ENCODE measurements at regions of chr21 and their contacts with region 1.

Region 1: DNA sequence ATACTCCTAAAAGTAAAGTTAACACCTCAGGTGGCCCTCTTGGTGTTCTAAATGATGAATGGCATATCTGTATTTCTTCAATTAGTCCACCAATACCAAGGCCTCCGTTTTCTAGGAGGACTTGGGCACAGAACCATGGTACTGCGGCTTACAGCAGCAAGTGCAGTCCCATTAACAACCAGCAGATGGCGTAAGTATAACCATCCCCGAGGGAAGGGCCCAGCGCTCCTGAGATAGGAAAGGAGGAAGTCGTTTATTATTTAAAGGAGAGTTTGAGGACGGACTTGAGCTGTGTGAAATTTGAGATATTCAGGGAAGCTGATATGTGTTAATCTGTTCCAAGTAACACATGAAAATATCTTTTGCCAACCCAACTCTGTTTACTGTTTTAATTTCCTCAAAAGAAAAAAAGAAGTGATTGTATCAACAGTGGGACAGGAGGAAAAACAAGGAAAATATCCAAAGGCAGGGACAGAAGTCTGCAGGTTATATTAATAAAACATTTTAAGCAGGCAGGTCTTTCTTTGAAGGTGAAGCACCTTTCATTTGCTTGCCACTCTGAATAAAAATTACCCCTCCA is 37.7 kb upstream of the KCNJ15 start:
- DNase-seq: peak; percentile 13 to 70 (median 52)
- ATAC-seq: peak; percentile 64
- H3K4me3 ChIP-seq: no peak overlapping the region
- H3K4me3 Mint-ChIP-seq: no peak overlapping the region
- H3K27ac ChIP-seq: no peak overlapping the region
- H3K27ac Mint-ChIP-seq: no peak overlapping the region
- H3K4me1 ChIP-seq: no peaks in the 10 kb centered on the region
- H3K4me1 Mint-ChIP-seq: no peaks in the 10 kb centered on the region
- H3K27me3 ChIP-seq: no peaks in the 10 kb centered on the region
- H3K27me3 Mint-ChIP-seq: peaks cover 5% of the 10 kb centered on the region
- CTCF ChIP-seq: peak; percentile 86

Region 2: DNA sequence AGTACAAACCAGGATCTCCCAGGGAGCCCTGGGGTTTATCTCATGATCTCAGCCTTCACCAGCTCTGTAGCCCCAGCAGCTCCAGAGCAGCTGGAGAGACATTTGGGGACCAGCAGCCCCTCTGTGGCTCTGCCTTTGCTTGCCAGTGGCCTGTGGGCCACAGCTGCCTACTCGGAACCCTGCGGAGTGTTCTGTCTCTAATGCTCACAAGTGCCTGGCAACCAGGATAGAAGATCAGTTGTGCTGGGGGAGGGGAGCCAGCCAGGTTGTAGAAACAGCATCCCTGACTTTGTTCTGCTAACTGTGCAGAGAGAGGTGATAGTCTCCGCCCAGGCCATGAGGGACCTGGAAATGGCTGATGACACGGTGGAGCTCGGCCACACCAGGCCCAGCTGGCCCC is 13.2 kb before region 1 on chr21:
- CTCF ChIA-PET with region 1: interaction called, 13 read pairs
- POLR2A ChIA-PET with region 1: interaction called, 3 read pairs
- intact Hi-C with region 1: no loop called
- DNase-seq: no peak
- ATAC-seq: no peak
- H3K4me3 ChIP-seq: no peak overlapping the region
- H3K4me3 Mint-ChIP-seq: no peak overlapping the region
- H3K27ac ChIP-seq: no peak overlapping the region
- H3K27ac Mint-ChIP-seq: no peak overlapping the region
- H3K4me1 ChIP-seq: no peaks in the 10 kb centered on the region
- H3K4me1 Mint-ChIP-seq: peaks cover 3% of the 10 kb centered on the region
- H3K27me3 ChIP-seq: no peaks in the 10 kb centered on the region
- H3K27me3 Mint-ChIP-seq: peaks cover 34% of the 10 kb centered on the region
- CTCF ChIP-seq: no peak

Region 3: GRCh38 chr21:38333301-38334272 is 114.4 kb after region 1 on chr21:
- CTCF ChIA-PET with region 1: interaction called, 9 read pairs
- POLR2A ChIA-PET with region 1: no interaction called
- intact Hi-C with region 1: loop called (anchors 5 kb)
- DNase-seq: peak in 1 of 9 experiments; percentile 25
- ATAC-seq: no peak
- H3K4me3 ChIP-seq: no peak overlapping the region
- H3K4me3 Mint-ChIP-seq: no peak overlapping the region
- H3K27ac ChIP-seq: no peak overlapping the region
- H3K27ac Mint-ChIP-seq: no peak overlapping the region
- H3K4me1 ChIP-seq: no peaks in the 10 kb centered on the region
- H3K4me1 Mint-ChIP-seq: no peaks in the 10 kb centered on the region
- H3K27me3 ChIP-seq: no peaks in the 10 kb centered on the region
- H3K27me3 Mint-ChIP-seq: no peaks in the 10 kb centered on the region
- CTCF ChIP-seq: no peak

Region 4: DNA sequence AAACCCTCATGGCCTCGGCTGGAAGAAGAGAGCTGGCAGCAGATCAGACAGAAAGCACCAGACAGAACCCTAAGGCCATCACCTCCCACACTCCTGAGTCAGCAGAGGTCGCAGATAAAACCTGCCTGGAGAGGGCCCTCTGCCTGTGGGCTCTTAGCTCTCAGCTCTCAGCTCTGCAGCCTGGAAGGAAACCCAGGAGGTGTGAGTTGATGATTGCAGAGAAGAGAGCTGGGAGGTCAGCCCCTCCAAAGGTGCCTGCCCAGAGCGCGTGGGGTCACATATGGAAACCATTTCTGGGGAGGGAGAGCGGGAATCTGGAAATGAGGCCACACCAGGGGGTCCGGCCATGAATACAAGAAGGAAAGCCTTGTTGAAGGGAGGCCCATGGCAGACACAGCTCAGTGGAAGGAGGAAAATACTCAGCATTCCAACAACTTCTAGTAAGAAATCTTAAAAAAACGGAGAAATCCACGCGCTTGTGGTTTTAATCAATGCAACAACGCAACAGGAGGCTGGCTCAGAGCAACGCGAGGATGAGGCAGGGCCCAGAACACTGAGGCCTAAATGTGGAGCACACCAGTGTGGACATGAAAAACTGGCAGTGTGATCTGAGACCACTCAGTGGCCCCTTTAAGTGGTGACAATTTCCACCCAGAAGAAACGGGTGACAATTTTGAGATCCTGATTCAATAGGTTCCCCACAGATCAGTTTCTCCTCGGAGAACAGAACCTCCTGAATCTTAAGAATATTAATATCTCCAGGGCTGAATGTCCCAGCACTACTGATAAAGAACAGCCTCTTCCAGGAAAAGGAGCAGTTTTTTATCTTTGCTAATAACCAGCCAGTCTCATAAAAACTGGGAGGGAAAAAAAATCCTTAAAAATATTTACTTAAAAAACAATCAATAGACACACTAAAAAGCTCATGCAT is 918.4 kb after region 1 on chr21:
- CTCF ChIA-PET with region 1: no interaction called
- POLR2A ChIA-PET with region 1: no interaction called
- intact Hi-C with region 1: loop called in 1 of 2 experiments (anchors 5 kb)
- DNase-seq: no peak
- ATAC-seq: no peak
- H3K4me3 ChIP-seq: no peak overlapping the region
- H3K4me3 Mint-ChIP-seq: no peak overlapping the region
- H3K27ac ChIP-seq: no peak overlapping the region
- H3K27ac Mint-ChIP-seq: no peak overlapping the region
- H3K4me1 ChIP-seq: no peaks in the 10 kb centered on the region
- H3K4me1 Mint-ChIP-seq: no peaks in the 10 kb centered on the region
- H3K27me3 ChIP-seq: no peaks in the 10 kb centered on the region
- H3K27me3 Mint-ChIP-seq: peaks cover 3% of the 10 kb centered on the region
- CTCF ChIP-seq: no peak

Measured in CD8-positive, alpha-beta T cell (primary cell).